ENCODE measurements at regions of chr3 and their contacts with region 1.

Region 1: GRCh38 chr3:188507244-188507720 is 353.3 kb downstream of the LPP start:
- DNase-seq: no peak
- ATAC-seq: no peak
- H3K4me3 Mint-ChIP-seq: no peak overlapping the region
- H3K27ac Mint-ChIP-seq: no peak overlapping the region
- H3K4me1 Mint-ChIP-seq: peaks cover 10% of the 10 kb centered on the region
- H3K27me3 Mint-ChIP-seq: no peaks in the 10 kb centered on the region

Region 2: DNA sequence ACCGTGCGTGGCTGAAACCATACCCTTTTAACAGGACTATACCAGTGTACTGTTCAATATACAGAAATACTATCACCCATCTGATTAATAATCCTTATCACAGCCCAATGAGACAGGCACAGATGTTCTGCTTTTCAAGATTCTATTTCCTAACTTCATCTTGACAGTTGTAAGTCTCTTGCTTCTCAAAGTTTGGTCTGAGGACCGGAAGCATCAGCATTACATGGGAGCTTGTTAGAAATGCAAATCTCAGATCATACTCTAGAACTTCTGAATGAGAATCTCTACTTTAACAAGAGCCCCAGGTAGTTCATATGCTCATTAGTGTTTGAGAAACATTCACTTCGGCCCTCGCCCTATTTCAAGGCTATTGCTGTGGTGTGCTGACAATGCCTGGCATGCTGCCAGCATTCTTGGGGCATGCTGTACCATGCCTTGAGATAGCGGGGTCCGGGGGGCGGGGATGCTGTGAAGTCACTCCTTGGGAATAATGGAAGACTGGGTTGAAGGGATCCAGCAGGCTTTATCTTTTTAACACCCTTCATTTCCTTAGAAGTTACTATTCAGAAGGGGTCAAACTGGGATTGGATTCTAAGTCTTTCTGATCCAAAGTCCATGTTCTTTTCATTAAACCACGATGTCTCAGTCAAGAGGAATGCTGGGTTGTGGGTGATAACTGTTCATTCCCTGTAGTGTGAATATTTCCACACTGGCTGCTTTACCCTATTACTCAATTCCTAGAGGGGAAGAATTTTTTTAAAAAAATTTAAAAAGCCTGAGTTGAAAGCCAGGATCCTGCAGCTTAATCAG is 158.6 kb before region 1 on chr3:
- CTCF ChIA-PET with region 1: no interaction called
- POLR2A ChIA-PET with region 1: no interaction called
- intact Hi-C with region 1: no loop called
- DNase-seq: no peak
- ATAC-seq: no peak
- H3K4me3 Mint-ChIP-seq: no peak overlapping the region
- H3K27ac Mint-ChIP-seq: no peak overlapping the region
- H3K4me1 Mint-ChIP-seq: no peaks in the 10 kb centered on the region
- H3K27me3 Mint-ChIP-seq: no peaks in the 10 kb centered on the region

Region 3: GRCh38 chr3:188524052-188524451 is 16.8 kb after region 1 on chr3:
- CTCF ChIA-PET with region 1: no interaction called
- POLR2A ChIA-PET with region 1: no interaction called
- intact Hi-C with region 1: loop called in 1 of 2 experiments (anchors 2 kb)
- DNase-seq: no peak
- ATAC-seq: no peak
- H3K4me3 Mint-ChIP-seq: no peak overlapping the region
- H3K27ac Mint-ChIP-seq: no peak overlapping the region
- H3K4me1 Mint-ChIP-seq: no peaks in the 10 kb centered on the region
- H3K27me3 Mint-ChIP-seq: no peaks in the 10 kb centered on the region

Region 4: GRCh38 chr3:188578576-188579363 is 71.5 kb after region 1 on chr3:
- CTCF ChIA-PET with region 1: no interaction called
- POLR2A ChIA-PET with region 1: no interaction called
- intact Hi-C with region 1: no loop called
- DNase-seq: peak; percentile 55
- ATAC-seq: peak; percentile 80
- H3K4me3 Mint-ChIP-seq: no peak overlapping the region
- H3K27ac Mint-ChIP-seq: peak overlapping the region; percentile 62
- H3K4me1 Mint-ChIP-seq: peaks cover 18% of the 10 kb centered on the region
- H3K27me3 Mint-ChIP-seq: no peaks in the 10 kb centered on the region